Endothelial cell of umbilical vein (primary cell): ENCODE measurements at regions of chr5 and their contacts with region 1.

Region 1: DNA sequence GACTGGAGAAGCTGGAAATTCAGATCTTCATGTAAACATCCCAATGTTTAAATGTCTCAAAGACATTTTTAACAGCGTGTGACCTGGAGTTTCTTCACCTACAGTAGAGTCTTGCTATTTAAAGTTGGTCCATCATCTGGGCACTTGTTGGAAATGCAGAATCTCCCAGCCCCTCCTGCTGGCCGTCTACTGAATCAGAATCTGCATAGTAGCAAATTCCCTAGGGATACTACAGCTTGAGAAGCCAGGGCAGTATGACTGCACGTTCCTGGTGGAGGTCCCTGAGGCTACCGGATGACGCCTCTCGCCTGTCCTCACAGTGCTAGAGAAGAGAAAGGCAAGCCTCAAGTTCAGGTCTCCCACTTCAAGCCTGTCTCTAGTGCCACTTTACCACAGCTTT is 15.7 kb downstream of the SAP30L start:
- DNase-seq: no peak
- H3K4me3 ChIP-seq: no peak overlapping the region
- H3K27ac ChIP-seq: no peak overlapping the region
- H3K4me1 ChIP-seq: no peaks in the 10 kb centered on the region
- H3K27me3 ChIP-seq: peaks cover 0 to 2% of the 10 kb centered on the region in 2 experiments
- CTCF ChIP-seq: peak in 1 of 2 donors; percentile 9
- POLR2A ChIP-seq: no peak

Region 2: GRCh38 chr5:154168395-154168794 is 293.1 kb before region 1 on chr5:
- CTCF ChIA-PET with region 1: no interaction called
- POLR2A ChIA-PET with region 1: no interaction called
- dilution Hi-C with region 1: no loop called
- intact Hi-C with region 1: no loop called
- DNase-seq: no peak
- H3K4me3 ChIP-seq: no peak overlapping the region
- H3K27ac ChIP-seq: no peak overlapping the region
- H3K4me1 ChIP-seq: no peaks in the 10 kb centered on the region
- H3K27me3 ChIP-seq: peaks cover 5 to 12% of the 10 kb centered on the region in 2 experiments
- CTCF ChIP-seq: no peak
- POLR2A ChIP-seq: no peak

Region 3: DNA sequence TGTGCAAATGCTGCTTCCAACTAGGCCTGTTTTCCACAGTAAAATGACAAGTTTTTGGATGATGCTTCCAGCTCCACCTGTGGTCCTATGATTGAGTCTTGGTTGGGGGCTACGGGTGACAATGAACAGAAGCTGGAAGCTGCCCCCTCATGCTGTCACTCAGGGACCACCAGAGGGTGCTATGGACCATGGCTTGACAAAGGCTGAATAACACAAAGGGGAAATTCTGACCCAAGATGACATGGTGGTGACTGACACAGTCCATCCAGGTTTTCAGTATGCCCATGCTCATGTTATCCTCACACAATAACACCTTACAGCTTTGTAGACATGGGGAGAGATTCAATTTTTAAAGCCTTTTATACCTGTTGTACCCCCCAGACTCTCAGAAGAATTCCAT is 39.7 kb before region 1 on chr5:
- CTCF ChIA-PET with region 1: interaction called, 25 read pairs
- POLR2A ChIA-PET with region 1: no interaction called
- dilution Hi-C with region 1: no loop called
- intact Hi-C with region 1: no loop called
- DNase-seq: peak; percentile 33
- H3K4me3 ChIP-seq: no peak overlapping the region
- H3K27ac ChIP-seq: no peak overlapping the region
- H3K4me1 ChIP-seq: no peaks in the 10 kb centered on the region
- H3K27me3 ChIP-seq: no peaks in the 10 kb centered on the region
- CTCF ChIP-seq: peak; percentile 56 to 62
- POLR2A ChIP-seq: no peak